Pancreas (tissue), 10 donors: ENCODE measurements at regions of chr20 and their contacts with region 1.

Region 1: DNA sequence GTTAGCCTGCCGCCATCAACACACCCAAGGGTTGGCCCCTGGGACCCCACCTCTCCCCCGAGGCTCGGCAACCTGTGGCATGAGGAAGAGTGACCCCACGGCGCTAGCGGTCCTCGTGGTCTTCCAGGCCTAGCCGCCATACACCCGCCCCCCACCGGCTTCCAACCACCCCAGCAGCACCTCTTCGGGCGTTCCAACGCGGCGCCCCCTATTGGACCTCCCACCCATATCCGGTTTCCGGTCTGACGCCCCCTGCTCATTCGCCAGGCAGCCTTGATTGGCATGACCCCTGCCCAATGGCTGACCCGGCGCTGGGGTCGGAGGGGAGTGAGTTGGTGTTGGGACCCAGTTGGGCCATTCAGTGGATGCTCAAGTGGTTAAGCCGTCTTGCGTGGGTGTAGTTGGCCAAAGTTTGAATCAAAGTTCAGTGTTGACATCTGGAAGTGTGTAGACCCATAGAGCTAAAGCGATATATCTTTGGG is at the start of gene GNAS-AS1:
- DNase-seq: peak; percentile 83 to 95 (median 90)
- ATAC-seq: peak; percentile 80 to 93 (median 89)
- H3K4me3 ChIP-seq: peak within 1 kb of the TSS; percentile 18 to 55 (median 40)
- H3K27ac ChIP-seq: no peak within 1 kb of the TSS
- H3K4me1 ChIP-seq: no peaks in the 10 kb centered on the region
- H3K27me3 ChIP-seq: peaks cover 0 to 8% (median 0%) of the 10 kb centered on the region in 4 donors
- CTCF ChIP-seq: no peak
- total RNA-seq, gene GNAS-AS1: 0.47 to 0.84 (median 0.53) TPM

Region 2: DNA sequence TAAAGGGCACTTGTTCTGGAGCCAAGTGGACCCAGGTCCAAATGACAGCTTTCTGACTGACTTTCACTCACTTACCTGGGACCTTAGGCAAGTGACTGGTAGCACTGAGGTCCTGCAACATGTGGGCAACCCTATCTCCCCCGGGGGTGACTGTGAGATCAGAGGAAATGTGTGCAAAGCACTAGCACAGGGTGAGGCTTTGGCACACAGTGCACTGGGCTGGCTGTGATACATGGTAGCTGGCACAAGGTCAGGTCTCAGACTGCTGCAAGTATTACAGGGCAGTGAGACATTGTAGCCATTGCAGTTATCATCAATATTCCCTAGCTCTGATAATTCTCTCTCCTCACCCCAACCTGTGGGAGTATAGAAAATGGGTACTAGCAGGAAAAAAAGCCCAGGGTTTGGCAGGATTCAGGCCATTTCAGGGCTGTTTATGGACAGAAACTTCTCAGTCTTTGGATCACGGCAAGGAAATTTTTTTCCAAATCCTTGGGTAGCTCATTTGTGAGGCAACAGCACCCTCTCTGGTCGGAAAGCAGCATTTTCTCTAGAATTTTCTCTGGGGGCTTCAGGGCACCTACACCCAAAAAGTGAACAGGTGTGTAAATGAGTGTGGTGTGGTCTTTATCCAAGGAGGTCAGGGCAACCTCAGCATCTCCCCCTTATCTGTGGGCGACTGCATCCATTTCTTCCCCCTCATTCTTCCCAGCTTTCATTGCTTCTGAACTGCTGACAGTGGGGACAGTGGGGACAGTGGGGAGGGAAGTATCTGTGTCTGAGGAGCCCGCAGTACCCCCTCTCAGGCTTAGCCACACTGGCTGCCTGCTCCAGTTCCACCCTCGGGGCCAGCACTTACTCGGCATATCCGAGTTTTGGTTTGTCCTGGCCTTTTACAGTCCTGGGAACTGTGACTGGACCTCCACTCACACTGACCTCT is 604.9 kb after region 1 on chr20:
- intact Hi-C with region 1: loop called in 1 of 3 experiments (anchors 10 kb)
- DNase-seq: peak in 4 of 6 donors; percentile 24 to 46 (median 35)
- ATAC-seq: peak; percentile 69 to 94 (median 84)
- H3K4me3 ChIP-seq: no peak overlapping the region
- H3K27ac ChIP-seq: no peak overlapping the region
- H3K4me1 ChIP-seq: peaks cover 0 to 5% (median 0%) of the 10 kb centered on the region in 3 donors
- H3K27me3 ChIP-seq: no peaks in the 10 kb centered on the region
- CTCF ChIP-seq: peak in 3 of 4 donors; percentile 33 to 48 (median 43)